ENCODE measurements at regions of chr5 and their contacts with region 1.

Region 1: GRCh38 chr5:32585446-32586275 is at the start of gene SUB1:
- DNase-seq: peak; percentile 95 to 97
- ATAC-seq: peak; percentile 85 to 93 (median 87)
- H3K4me3 ChIP-seq: peak within 1 kb of the TSS; percentile 94
- H3K4me3 Mint-ChIP-seq: peak within 1 kb of the TSS; percentile 98
- H3K27ac ChIP-seq: peak within 1 kb of the TSS; percentile 99
- H3K27ac Mint-ChIP-seq: peak within 1 kb of the TSS; percentile 93 to 95
- H3K4me1 ChIP-seq: peaks cover 32% of the 10 kb centered on the region
- H3K4me1 Mint-ChIP-seq: peaks cover 60% of the 10 kb centered on the region in 2 donors
- H3K27me3 ChIP-seq: no peaks in the 10 kb centered on the region
- H3K27me3 Mint-ChIP-seq: no peaks in the 10 kb centered on the region
- CTCF ChIP-seq: no peak
- total RNA-seq, gene SUB1: 330 to 352 (median 338) TPM

Region 2: DNA sequence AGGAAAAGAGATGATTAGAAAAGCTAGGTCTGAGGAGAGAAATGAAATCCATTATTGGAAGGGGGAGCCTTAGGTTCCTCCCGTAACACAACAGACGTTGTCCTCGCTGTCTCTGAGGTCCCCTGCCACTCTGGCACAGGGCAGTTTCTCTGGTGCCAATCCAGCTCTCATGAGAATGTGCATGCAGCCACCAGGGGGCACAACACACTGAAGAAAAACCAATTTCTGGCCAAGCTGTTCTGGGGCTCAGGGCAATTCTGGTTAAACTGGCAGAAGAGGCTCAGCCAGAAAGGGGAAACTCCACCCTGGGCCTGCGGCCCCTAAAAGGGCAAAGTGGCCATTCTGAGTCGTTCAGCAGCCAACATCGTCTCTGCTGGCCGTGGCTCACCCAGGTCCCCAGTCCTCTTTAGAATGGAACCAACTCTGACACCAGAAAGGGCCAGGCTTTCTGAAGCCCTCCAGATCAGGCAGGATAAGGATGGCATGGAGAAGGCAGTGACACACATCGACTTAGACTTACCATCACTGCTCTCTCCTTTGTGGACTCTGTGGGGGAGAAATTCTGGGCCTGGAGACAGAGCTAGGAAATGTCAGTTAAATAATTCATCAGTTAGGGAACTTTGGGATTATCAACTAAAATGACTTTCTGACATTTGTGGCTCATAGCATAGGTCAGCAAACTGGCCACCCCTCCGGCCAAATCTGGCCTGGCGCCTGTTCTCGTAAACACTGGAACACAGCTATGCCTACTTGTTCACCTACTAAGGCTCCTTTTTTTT is 353.0 kb before region 1 on chr5:
- intact Hi-C with region 1: loop called (anchors 5 kb)
- DNase-seq: peak; percentile 81 to 88
- ATAC-seq: peak; percentile 92 to 95 (median 93)
- H3K4me3 ChIP-seq: no peak overlapping the region
- H3K4me3 Mint-ChIP-seq: peak overlapping the region; percentile 59
- H3K27ac ChIP-seq: peak overlapping the region; percentile 57
- H3K27ac Mint-ChIP-seq: peak overlapping the region; percentile 94 to 97
- H3K4me1 ChIP-seq: peaks cover 23% of the 10 kb centered on the region
- H3K4me1 Mint-ChIP-seq: peaks cover 30 to 36% of the 10 kb centered on the region in 2 donors
- H3K27me3 ChIP-seq: no peaks in the 10 kb centered on the region
- H3K27me3 Mint-ChIP-seq: no peaks in the 10 kb centered on the region
- CTCF ChIP-seq: peak; percentile 87

Region 3: GRCh38 chr5:32312647-32313523 is 272.8 kb before region 1 on chr5 and contains the start of gene MTMR12:
- intact Hi-C with region 1: loop called (anchors 5 kb)
- DNase-seq: peak; percentile 100
- ATAC-seq: peak; percentile 87 to 97 (median 89)
- H3K4me3 ChIP-seq: peak within 1 kb of the TSS; percentile 73
- H3K4me3 Mint-ChIP-seq: peak within 1 kb of the TSS; percentile 95
- H3K27ac ChIP-seq: peak within 1 kb of the TSS; percentile 85
- H3K27ac Mint-ChIP-seq: peak within 1 kb of the TSS; percentile 95
- H3K4me1 ChIP-seq: peaks cover 33% of the 10 kb centered on the region
- H3K4me1 Mint-ChIP-seq: peaks cover 42% of the 10 kb centered on the region in 2 donors
- H3K27me3 ChIP-seq: no peaks in the 10 kb centered on the region
- H3K27me3 Mint-ChIP-seq: no peaks in the 10 kb centered on the region
- CTCF ChIP-seq: no peak
- total RNA-seq, gene MTMR12: 36.9 to 47.7 (median 39.8) TPM

Region 4: GRCh38 chr5:32339198-32339597 is 246.5 kb before region 1 on chr5:
- intact Hi-C with region 1: no loop called
- DNase-seq: no peak
- ATAC-seq: no peak
- H3K4me3 ChIP-seq: no peak overlapping the region
- H3K4me3 Mint-ChIP-seq: no peak overlapping the region
- H3K27ac ChIP-seq: no peak overlapping the region
- H3K27ac Mint-ChIP-seq: no peak overlapping the region
- H3K4me1 ChIP-seq: no peaks in the 10 kb centered on the region
- H3K4me1 Mint-ChIP-seq: no peaks in the 10 kb centered on the region
- H3K27me3 ChIP-seq: no peaks in the 10 kb centered on the region
- H3K27me3 Mint-ChIP-seq: peaks cover 0 to 2% of the 10 kb centered on the region in 2 donors
- CTCF ChIP-seq: no peak

Region 5: GRCh38 chr5:32489791-32490582 is 95.7 kb before region 1 on chr5:
- intact Hi-C with region 1: loop called (anchors 1 kb)
- DNase-seq: peak; percentile 48 to 86
- ATAC-seq: peak in 2 of 3 donors; percentile 54 to 62
- H3K4me3 ChIP-seq: no peak overlapping the region
- H3K4me3 Mint-ChIP-seq: no peak overlapping the region
- H3K27ac ChIP-seq: no peak overlapping the region
- H3K27ac Mint-ChIP-seq: no peak overlapping the region
- H3K4me1 ChIP-seq: no peaks in the 10 kb centered on the region
- H3K4me1 Mint-ChIP-seq: no peaks in the 10 kb centered on the region
- H3K27me3 ChIP-seq: no peaks in the 10 kb centered on the region
- H3K27me3 Mint-ChIP-seq: no peaks in the 10 kb centered on the region
- CTCF ChIP-seq: peak; percentile 73

Region 6: GRCh38 chr5:32628048-32628803 is 42.6 kb after region 1 on chr5:
- intact Hi-C with region 1: no loop called
- DNase-seq: no peak
- ATAC-seq: no peak
- H3K4me3 ChIP-seq: no peak overlapping the region
- H3K4me3 Mint-ChIP-seq: no peak overlapping the region
- H3K27ac ChIP-seq: no peak overlapping the region
- H3K27ac Mint-ChIP-seq: no peak overlapping the region
- H3K4me1 ChIP-seq: no peaks in the 10 kb centered on the region
- H3K4me1 Mint-ChIP-seq: no peaks in the 10 kb centered on the region
- H3K27me3 ChIP-seq: no peaks in the 10 kb centered on the region
- H3K27me3 Mint-ChIP-seq: no peaks in the 10 kb centered on the region
- CTCF ChIP-seq: no peak